Activated B cell treated with CpG ODN at 0.5 μM for 24 hours (primary cell): ENCODE measurements at regions of chr6 and their contacts with region 1.

Region 1: GRCh38 chr6:157800420-157801237 is 22.4 kb upstream of the SNX9 start:
- DNase-seq: no peak
- ATAC-seq: peak; percentile 90
- H3K4me3 Mint-ChIP-seq: peak overlapping the region; percentile 66
- H3K27ac Mint-ChIP-seq: peak overlapping the region; percentile 70
- H3K4me1 Mint-ChIP-seq: peaks cover 37% of the 10 kb centered on the region
- H3K27me3 Mint-ChIP-seq: no peaks in the 10 kb centered on the region
- CTCF ChIP-seq: no peak

Region 2: GRCh38 chr6:157756708-157757429 is 43.8 kb before region 1 on chr6:
- CTCF ChIA-PET with region 1: interaction called, 11 read pairs
- POLR2A ChIA-PET with region 1: interaction called, 12 read pairs
- intact Hi-C with region 1: no loop called
- DNase-seq: peak; percentile 72
- ATAC-seq: peak; percentile 54
- H3K4me3 Mint-ChIP-seq: peak overlapping the region; percentile 38
- H3K27ac Mint-ChIP-seq: no peak overlapping the region
- H3K4me1 Mint-ChIP-seq: peaks cover 69% of the 10 kb centered on the region
- H3K27me3 Mint-ChIP-seq: peaks cover 6% of the 10 kb centered on the region
- CTCF ChIP-seq: peak; percentile 60

Region 3: GRCh38 chr6:157813757-157814455 is 13.3 kb after region 1 on chr6:
- CTCF ChIA-PET with region 1: interaction called, 4 read pairs
- POLR2A ChIA-PET with region 1: interaction called, 3 read pairs
- intact Hi-C with region 1: loop called (anchors 2 kb)
- DNase-seq: no peak
- ATAC-seq: no peak
- H3K4me3 Mint-ChIP-seq: no peak overlapping the region
- H3K27ac Mint-ChIP-seq: peak overlapping the region; percentile 2
- H3K4me1 Mint-ChIP-seq: peaks cover 43% of the 10 kb centered on the region
- H3K27me3 Mint-ChIP-seq: no peaks in the 10 kb centered on the region
- CTCF ChIP-seq: no peak

Region 4: GRCh38 chr6:157823001-157823527 is 22.4 kb after region 1 on chr6 and contains the start of gene SNX9:
- CTCF ChIA-PET with region 1: no interaction called
- POLR2A ChIA-PET with region 1: interaction called, 8 read pairs
- intact Hi-C with region 1: loop called (anchors 1 kb)
- DNase-seq: peak; percentile 70
- ATAC-seq: peak; percentile 65
- H3K4me3 Mint-ChIP-seq: peak within 1 kb of the TSS; percentile 95
- H3K27ac Mint-ChIP-seq: peak within 1 kb of the TSS; percentile 98
- H3K4me1 Mint-ChIP-seq: peaks cover 47% of the 10 kb centered on the region
- H3K27me3 Mint-ChIP-seq: no peaks in the 10 kb centered on the region
- CTCF ChIP-seq: no peak
- total RNA-seq, gene SNX9: 38.8 and 40.0 TPM in 2 replicates

Region 5: GRCh38 chr6:157879873-157880254 is 79.2 kb after region 1 on chr6:
- CTCF ChIA-PET with region 1: no interaction called
- POLR2A ChIA-PET with region 1: no interaction called
- intact Hi-C with region 1: no loop called
- DNase-seq: no peak
- ATAC-seq: no peak
- H3K4me3 Mint-ChIP-seq: no peak overlapping the region
- H3K27ac Mint-ChIP-seq: no peak overlapping the region
- H3K4me1 Mint-ChIP-seq: peaks cover 35% of the 10 kb centered on the region
- H3K27me3 Mint-ChIP-seq: no peaks in the 10 kb centered on the region
- CTCF ChIP-seq: no peak